Activated naive CD4-positive, alpha-beta T cell treated with anti-CD3 and anti-CD28 coated beads for 36 hours (primary cell): ENCODE measurements at regions of chr12 and their contacts with region 1.

Region 1: DNA sequence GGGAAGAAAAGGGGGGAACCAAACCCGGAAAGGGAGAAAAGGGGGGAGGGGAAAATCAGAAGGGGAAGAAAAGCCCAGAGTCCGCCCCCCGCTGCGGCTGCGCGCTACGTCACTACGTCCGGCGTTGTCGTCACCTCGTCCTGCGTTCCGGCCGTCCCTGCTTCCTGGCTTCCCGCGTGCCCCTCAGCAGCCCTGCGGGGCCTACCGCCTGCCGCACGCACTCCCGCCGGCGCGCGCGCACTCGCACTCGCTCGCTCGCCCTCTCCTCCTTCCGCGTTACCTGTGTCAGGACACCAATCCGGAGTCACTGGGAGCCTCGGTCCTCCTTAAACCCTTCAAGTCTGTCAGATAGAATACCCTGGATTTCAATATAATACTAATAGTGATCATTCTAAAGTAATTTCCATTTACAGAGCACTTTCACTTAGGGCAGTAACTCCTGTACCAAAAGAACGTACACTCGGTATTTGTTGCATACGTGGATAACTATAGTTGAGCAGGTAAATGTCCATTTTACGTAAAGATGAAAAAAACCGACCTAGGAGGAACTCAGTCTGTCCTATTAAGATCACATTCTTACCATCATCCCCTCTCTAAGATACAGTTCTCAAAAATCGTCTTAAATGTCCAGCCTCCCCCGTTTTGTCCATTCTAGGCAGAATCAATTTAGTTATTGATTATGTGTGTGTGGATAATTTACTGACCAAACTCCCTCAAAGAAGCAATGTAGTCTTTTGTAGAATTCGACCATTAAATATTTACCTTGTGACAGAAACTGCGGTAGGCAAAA is at the start of gene R3HDM2:
- DNase-seq: peak; percentile 97
- H3K4me3 Mint-ChIP-seq: peak within 1 kb of the TSS; percentile 94
- H3K27ac Mint-ChIP-seq: peak within 1 kb of the TSS; percentile 98
- H3K4me1 Mint-ChIP-seq: peaks cover 37% of the 10 kb centered on the region
- H3K27me3 Mint-ChIP-seq: no peaks in the 10 kb centered on the region
- total RNA-seq, gene R3HDM2: 42.2 to 44.8 TPM

Region 2: GRCh38 chr12:56724972-56725722 is 706.0 kb before region 1 on chr12 and contains the start of gene NACA:
- CTCF ChIA-PET with region 1: no interaction called
- intact Hi-C with region 1: loop called (anchors 2 kb)
- DNase-seq: peak; percentile 99
- H3K4me3 Mint-ChIP-seq: peak within 1 kb of the TSS; percentile 99
- H3K27ac Mint-ChIP-seq: peak within 1 kb of the TSS; percentile 99
- H3K4me1 Mint-ChIP-seq: peaks cover 46% of the 10 kb centered on the region
- H3K27me3 Mint-ChIP-seq: no peaks in the 10 kb centered on the region
- total RNA-seq, gene NACA: 1,279 to 1,321 TPM

Region 3: DNA sequence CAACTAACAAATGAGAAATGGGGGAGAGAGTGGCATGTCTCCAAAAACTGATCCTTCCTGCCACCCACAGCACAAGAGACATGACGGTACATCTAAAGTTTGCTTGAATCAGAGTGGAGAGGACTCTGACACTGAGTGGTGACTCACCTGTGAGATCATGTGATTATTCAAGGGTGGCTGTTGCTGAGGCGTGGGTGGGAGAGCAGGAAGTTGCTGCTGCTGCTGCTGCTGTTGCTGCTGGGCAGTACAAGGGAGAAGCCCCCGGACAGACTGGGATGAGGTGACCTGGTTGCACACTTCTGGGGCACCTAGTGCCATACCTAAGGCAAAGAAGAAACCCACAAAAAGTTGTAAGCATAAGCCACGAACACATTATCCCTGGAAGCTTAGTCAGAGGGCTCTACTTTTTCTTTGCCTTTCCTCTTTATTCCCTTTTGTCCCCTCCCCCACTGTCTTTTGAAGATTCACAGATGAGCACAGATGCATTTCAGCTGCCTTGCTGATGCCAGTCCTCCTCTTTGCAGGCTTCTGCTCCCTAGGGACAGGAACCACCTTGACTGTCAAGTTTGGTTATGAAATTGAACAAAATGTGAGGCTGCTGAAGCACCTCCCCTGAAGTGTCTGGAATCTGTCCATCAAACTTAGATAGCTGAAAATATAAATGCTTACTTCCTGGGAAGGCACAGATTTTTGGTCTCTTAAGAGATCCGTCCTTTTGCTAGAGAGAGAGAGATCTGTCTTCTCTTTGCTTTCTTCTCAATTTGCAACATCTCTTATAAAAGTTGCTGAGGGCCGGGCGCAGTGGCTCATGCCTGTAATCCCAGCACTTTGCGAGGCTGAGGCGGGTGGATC is 150.7 kb before region 1 on chr12:
- CTCF ChIA-PET with region 1: no interaction called
- intact Hi-C with region 1: loop called (anchors 1 kb)
- DNase-seq: peak; percentile 90
- H3K4me3 Mint-ChIP-seq: peak overlapping the region; percentile 46
- H3K27ac Mint-ChIP-seq: peak overlapping the region; percentile 90
- H3K4me1 Mint-ChIP-seq: peaks cover 28% of the 10 kb centered on the region
- H3K27me3 Mint-ChIP-seq: no peaks in the 10 kb centered on the region

Region 4: GRCh38 chr12:57340104-57340503 is 91.0 kb before region 1 on chr12:
- CTCF ChIA-PET with region 1: no interaction called
- intact Hi-C with region 1: loop called (anchors 5 kb)
- DNase-seq: no peak
- H3K4me3 Mint-ChIP-seq: no peak overlapping the region
- H3K27ac Mint-ChIP-seq: no peak overlapping the region
- H3K4me1 Mint-ChIP-seq: peaks cover 42% of the 10 kb centered on the region
- H3K27me3 Mint-ChIP-seq: no peaks in the 10 kb centered on the region

Region 5: DNA sequence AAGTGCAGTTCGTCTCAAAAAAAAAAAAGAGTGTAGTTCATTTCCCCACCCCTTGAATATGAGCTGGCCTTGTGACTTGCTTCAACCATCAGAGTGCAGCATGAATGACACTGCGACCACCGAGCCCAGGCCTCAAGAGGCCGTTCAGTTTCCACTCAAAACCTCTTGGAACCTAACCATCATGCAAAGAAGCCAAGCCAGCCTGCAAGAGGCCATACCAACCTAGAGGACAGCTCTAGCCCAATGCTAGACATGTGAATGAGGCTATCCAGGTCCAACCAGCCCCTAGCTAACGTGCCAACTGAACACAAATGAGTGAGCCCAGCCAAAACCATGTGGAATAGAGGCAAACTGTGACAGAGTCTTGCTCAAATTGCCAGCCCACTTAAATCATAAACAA is 30.0 kb before region 1 on chr12:
- CTCF ChIA-PET with region 1: no interaction called
- intact Hi-C with region 1: loop called (anchors 1 kb)
- DNase-seq: no peak
- H3K4me3 Mint-ChIP-seq: no peak overlapping the region
- H3K27ac Mint-ChIP-seq: no peak overlapping the region
- H3K4me1 Mint-ChIP-seq: peaks cover 21% of the 10 kb centered on the region
- H3K27me3 Mint-ChIP-seq: no peaks in the 10 kb centered on the region

Region 6: GRCh38 chr12:57611108-57611809 is 180.1 kb after region 1 on chr12 and contains the start of gene ARHGEF25:
- CTCF ChIA-PET with region 1: no interaction called
- intact Hi-C with region 1: no loop called
- DNase-seq: peak; percentile 58
- H3K4me3 Mint-ChIP-seq: peak within 1 kb of the TSS; percentile 65
- H3K27ac Mint-ChIP-seq: no peak within 1 kb of the TSS
- H3K4me1 Mint-ChIP-seq: peaks cover 9% of the 10 kb centered on the region
- H3K27me3 Mint-ChIP-seq: peaks cover 19% of the 10 kb centered on the region
- total RNA-seq, gene ARHGEF25: 1.4 to 1.5 TPM